Activated naive CD4-positive, alpha-beta T cell treated with anti-CD3 and anti-CD28 coated beads for 36 hours (primary cell): ENCODE measurements at regions of chr5 and their contacts with region 1.

Region 1: DNA sequence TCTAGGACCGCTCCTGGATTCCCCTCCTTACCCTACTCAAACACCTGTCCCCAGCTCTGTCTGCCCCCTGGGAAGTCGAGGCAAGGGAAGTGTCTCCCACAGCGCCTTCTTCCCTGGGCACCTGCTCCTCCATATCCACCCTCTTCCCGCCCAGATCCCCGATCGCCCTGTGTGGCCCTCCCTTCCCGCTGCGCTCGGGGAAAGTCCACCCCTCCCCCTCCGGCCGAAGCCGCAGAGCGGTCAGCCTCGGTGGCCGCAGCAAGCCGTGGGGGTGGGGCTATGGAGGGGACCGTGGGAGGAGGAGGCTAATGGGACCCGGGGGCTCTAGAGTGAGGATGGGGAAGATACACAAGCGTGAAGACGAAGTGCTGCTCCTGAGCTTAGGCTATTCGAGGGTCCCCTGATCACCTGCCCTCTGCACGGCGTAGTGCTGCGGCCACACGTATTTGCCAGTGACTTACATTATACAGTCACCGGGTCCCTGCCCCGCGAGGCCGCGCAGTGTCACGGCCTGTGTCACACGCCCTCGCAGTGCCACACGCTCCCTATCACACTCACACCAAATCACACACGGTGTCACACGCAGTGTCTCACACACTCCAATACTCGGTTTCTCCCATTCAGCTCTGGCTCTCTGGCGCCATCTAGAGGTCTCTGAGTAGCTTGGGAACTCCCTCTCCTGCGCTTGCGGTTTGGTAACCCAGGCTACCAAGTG is 658 bp upstream of the PCDH1 start:
- DNase-seq: peak; percentile 96
- H3K4me3 Mint-ChIP-seq: peak overlapping the region; percentile 65
- H3K27ac Mint-ChIP-seq: no peak overlapping the region
- H3K4me1 Mint-ChIP-seq: peaks cover 19% of the 10 kb centered on the region
- H3K27me3 Mint-ChIP-seq: peaks cover 62% of the 10 kb centered on the region

Region 2: DNA sequence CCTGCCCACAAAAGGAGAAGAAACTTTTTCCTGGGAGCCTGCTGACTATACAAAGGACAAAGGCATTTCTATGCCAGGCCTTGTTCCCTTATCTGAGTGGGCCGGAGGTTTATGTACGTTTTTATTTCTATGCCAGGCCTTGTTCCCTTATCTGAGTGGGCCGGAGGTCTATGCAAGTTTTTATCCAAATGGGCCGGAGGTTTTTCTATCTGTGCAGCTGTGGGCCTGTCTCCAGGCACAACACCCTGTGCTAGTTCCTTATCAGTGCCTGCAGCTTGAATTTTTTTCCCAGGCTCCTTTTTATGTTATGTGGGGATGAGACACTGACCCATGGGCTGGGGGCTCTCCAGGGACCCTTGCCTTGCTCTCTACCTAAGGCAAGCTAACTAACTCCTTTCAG is 580.5 kb before region 1 on chr5:
- CTCF ChIA-PET with region 1: no interaction called
- intact Hi-C with region 1: no loop called
- DNase-seq: no peak
- H3K4me3 Mint-ChIP-seq: no peak overlapping the region
- H3K27ac Mint-ChIP-seq: no peak overlapping the region
- H3K4me1 Mint-ChIP-seq: no peaks in the 10 kb centered on the region
- H3K27me3 Mint-ChIP-seq: no peaks in the 10 kb centered on the region

Region 3: GRCh38 chr5:141681695-141682641 is 196.9 kb before region 1 on chr5 and contains the start of gene ARAP3:
- CTCF ChIA-PET with region 1: interaction called, 11 read pairs
- intact Hi-C with region 1: no loop called
- DNase-seq: peak; percentile 41
- H3K4me3 Mint-ChIP-seq: peak within 1 kb of the TSS; percentile 63
- H3K27ac Mint-ChIP-seq: peak within 1 kb of the TSS; percentile 25
- H3K4me1 Mint-ChIP-seq: peaks cover 18% of the 10 kb centered on the region
- H3K27me3 Mint-ChIP-seq: no peaks in the 10 kb centered on the region
- total RNA-seq, gene ARAP3: 1.2 to 2.2 TPM

Region 4: GRCh38 chr5:141713616-141714309 is 165.1 kb before region 1 on chr5:
- CTCF ChIA-PET with region 1: interaction called, 15 read pairs
- intact Hi-C with region 1: no loop called
- DNase-seq: no peak
- H3K4me3 Mint-ChIP-seq: no peak overlapping the region
- H3K27ac Mint-ChIP-seq: no peak overlapping the region
- H3K4me1 Mint-ChIP-seq: no peaks in the 10 kb centered on the region
- H3K27me3 Mint-ChIP-seq: peaks cover 4% of the 10 kb centered on the region

Region 5: DNA sequence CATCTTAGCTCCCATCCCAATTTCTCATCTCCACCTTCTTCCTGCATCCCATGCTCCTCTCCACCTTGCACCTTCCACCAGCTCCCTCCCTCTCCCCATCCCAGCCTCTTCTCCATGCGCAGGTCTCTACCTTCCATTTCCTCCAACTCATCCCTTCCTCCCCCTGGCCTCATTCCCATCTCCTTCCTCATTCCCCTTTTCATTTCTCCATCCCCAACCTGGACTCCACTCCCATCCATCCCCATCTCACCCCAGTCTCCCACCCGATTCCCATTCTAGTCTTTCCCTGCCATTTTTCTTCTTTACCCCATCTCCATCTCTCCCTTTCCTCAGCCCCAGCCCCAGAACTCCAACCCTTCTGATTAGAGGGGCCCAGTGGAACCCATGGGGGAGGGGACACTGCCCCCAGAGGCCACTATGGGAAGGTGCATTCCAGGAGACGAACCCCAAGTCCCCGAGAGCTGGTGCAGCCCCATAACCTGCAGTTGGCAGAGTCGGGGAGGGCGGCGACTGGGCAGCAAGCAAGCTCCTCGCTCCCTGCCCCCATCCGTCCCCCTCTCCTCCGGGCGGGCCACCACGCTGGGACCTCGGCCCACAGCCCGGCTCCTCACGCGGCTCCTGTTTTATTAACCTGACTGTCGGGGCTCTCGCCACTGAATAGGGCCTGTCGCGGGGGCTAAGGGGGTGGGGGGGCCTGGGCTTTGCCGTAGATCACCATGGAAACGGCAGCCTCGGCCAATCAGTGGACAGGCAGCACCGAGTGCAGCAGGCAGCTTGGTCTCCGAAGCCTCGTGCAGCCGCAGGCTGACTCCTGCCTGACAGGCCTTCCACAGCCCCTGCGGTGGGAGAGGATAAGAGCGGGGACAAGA is 67.3 kb before region 1 on chr5:
- CTCF ChIA-PET with region 1: interaction called, 50 read pairs
- intact Hi-C with region 1: loop called (anchors 1 kb)
- DNase-seq: peak; percentile 25
- H3K4me3 Mint-ChIP-seq: no peak overlapping the region
- H3K27ac Mint-ChIP-seq: no peak overlapping the region
- H3K4me1 Mint-ChIP-seq: no peaks in the 10 kb centered on the region
- H3K27me3 Mint-ChIP-seq: peaks cover 44% of the 10 kb centered on the region

Region 6: DNA sequence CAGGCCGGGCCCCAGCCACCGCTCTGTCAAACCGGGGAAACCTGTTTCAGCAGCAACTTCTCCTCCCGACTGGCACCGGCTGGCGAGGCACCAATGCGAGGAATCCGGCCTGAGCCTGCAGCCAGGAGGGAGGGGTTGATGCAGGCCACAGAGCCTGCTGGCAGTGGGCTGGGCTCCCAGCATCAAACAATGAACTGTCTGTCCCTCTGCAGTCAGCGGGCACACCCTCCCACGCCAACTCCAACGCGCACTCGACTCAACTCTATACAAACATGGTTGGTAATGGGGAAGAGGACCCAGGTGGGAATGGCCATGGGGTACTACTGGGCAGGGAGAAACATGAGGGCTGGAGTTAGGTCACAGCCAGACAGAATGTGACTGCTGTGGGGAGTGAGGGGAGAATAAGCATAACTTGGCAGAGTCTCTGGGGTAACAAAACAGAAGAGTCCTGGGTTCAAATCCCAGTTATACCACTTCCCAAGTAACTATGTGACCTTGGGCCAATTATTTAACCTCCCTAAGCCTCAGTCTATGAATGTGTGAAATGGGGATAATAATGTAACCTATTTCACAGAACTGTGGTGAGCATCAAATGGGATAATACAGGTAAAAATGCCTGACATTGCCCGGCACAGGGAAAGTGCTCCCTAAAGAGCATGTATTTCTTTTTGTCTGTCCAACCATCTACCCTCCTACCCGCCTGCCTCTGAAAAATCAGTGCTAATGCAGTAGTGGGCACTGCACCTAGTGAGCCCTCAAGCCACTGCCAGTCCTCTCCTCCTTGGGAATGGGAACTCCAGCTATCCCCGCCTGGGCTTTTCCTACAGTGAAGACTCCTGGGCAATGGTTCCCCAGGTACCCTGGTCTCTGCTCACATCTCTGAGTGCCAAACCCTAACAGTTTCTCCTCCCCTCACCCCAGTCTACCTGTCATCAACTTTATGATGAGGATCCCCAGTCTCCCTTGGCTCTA is 12.4 kb before region 1 on chr5:
- CTCF ChIA-PET with region 1: interaction called, 16 read pairs
- intact Hi-C with region 1: no loop called
- DNase-seq: no peak
- H3K4me3 Mint-ChIP-seq: no peak overlapping the region
- H3K27ac Mint-ChIP-seq: no peak overlapping the region
- H3K4me1 Mint-ChIP-seq: no peaks in the 10 kb centered on the region
- H3K27me3 Mint-ChIP-seq: peaks cover 6% of the 10 kb centered on the region

Region 7: GRCh38 chr5:141960449-141961202 is 81.8 kb after region 1 on chr5:
- CTCF ChIA-PET with region 1: interaction called, 63 read pairs
- intact Hi-C with region 1: loop called (anchors 1 kb)
- DNase-seq: peak; percentile 97
- H3K4me3 Mint-ChIP-seq: peak overlapping the region; percentile 33
- H3K27ac Mint-ChIP-seq: peak overlapping the region; percentile 74
- H3K4me1 Mint-ChIP-seq: peaks cover 38% of the 10 kb centered on the region
- H3K27me3 Mint-ChIP-seq: no peaks in the 10 kb centered on the region

Region 8: GRCh38 chr5:141992349-141992963 is 113.6 kb after region 1 on chr5:
- CTCF ChIA-PET with region 1: no interaction called
- intact Hi-C with region 1: no loop called
- DNase-seq: peak; percentile 95
- H3K4me3 Mint-ChIP-seq: no peak overlapping the region
- H3K27ac Mint-ChIP-seq: peak overlapping the region; percentile 53
- H3K4me1 Mint-ChIP-seq: peaks cover 13% of the 10 kb centered on the region
- H3K27me3 Mint-ChIP-seq: no peaks in the 10 kb centered on the region

Region 9: GRCh38 chr5:142087920-142088679 is 209.2 kb after region 1 on chr5:
- CTCF ChIA-PET with region 1: no interaction called
- intact Hi-C with region 1: no loop called
- DNase-seq: peak; percentile 64
- H3K4me3 Mint-ChIP-seq: no peak overlapping the region
- H3K27ac Mint-ChIP-seq: peak overlapping the region; percentile 90
- H3K4me1 Mint-ChIP-seq: peaks cover 52% of the 10 kb centered on the region
- H3K27me3 Mint-ChIP-seq: no peaks in the 10 kb centered on the region

Region 10: DNA sequence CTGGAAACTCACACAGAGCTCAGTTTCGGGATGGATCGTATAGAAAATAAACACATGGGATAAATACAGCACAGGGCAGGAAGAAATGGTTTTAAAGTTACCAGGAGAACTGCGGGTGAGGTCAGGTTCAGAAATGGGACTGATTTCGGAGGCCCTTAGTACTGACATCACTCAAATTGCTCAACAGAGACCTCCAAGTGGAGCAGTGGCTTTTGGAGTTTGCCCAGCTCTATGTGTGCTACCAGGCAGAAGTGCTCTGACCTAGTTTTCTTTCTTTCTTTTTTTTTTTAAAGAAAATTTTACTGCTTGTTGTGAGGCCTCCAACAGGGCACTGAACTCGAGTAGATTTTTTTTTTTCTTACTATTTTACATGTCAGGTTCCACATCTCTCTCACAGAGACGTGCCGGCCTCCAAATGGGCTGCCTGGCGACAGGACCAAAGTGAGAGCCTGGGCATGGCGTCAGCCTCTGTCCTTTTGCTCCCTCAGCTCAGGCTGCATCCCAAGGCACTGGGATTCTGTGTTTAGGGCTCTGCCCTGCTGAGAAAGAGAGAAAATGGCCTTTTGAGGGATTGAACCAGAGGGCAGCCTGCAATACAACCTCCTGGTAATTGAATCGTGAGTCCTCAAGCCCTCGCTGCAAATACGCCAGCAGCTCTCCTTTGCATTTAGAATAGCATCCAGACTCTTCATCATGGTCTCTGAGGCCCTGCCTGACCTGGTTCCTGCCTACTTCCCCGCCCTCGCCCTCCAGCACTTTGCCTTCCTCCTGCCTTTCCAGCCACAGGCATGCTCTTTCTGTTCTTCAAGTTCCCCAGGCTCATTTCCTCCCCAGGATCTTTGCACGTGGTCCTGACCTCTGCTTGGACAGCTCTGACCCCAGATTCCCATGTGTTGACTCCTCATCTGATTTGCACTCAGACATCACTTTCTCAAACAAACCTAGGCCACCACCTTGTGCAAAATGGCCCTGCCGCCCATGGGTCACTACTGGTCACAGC is 633.5 kb after region 1 on chr5:
- CTCF ChIA-PET with region 1: no interaction called
- intact Hi-C with region 1: no loop called
- DNase-seq: no peak
- H3K4me3 Mint-ChIP-seq: no peak overlapping the region
- H3K27ac Mint-ChIP-seq: no peak overlapping the region
- H3K4me1 Mint-ChIP-seq: peaks cover 23% of the 10 kb centered on the region
- H3K27me3 Mint-ChIP-seq: no peaks in the 10 kb centered on the region